ENCODE measurements at regions of chr2 and their contacts with region 1.

Region 1: GRCh38 chr2:54755641-54756326 is 32.3 kb downstream of the EML6 start:
- DNase-seq: peak; percentile 95
- H3K4me3 ChIP-seq: peak overlapping the region; percentile 62
- H3K27ac ChIP-seq: peak overlapping the region; percentile 92
- H3K4me1 ChIP-seq: peaks cover 83% of the 10 kb centered on the region
- CTCF ChIP-seq: peak; percentile 83

Region 2: DNA sequence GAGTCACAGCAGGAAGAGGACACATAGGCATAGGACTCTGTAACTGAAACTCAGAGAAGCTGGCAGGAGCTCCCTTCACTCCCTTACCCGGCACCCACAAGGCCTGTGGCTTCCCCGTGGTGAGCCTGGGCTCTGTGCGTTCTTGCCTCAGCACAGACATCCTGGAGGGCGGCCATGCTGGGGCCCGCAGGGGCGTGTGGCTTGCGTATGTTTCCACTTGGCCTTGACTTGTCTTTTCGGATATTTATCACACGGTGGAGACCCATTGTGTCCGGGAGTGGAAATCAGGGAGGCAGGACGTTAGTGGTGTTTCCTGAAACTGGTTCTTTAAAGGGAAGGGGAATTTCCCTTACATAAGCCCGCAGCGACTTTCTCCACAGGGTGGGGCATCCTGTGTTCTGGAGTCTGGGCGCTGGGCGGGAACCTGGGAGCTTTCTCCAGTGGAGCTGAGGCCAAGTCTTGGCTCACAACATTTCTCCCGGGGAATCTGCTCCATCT is 82.2 kb before region 1 on chr2:
- CTCF ChIA-PET with region 1: no interaction called
- POLR2A ChIA-PET with region 1: no interaction called
- intact Hi-C with region 1: no loop called
- DNase-seq: no peak
- H3K4me3 ChIP-seq: no peak overlapping the region
- H3K27ac ChIP-seq: no peak overlapping the region
- H3K4me1 ChIP-seq: peaks cover 30% of the 10 kb centered on the region
- CTCF ChIP-seq: no peak

Region 3: DNA sequence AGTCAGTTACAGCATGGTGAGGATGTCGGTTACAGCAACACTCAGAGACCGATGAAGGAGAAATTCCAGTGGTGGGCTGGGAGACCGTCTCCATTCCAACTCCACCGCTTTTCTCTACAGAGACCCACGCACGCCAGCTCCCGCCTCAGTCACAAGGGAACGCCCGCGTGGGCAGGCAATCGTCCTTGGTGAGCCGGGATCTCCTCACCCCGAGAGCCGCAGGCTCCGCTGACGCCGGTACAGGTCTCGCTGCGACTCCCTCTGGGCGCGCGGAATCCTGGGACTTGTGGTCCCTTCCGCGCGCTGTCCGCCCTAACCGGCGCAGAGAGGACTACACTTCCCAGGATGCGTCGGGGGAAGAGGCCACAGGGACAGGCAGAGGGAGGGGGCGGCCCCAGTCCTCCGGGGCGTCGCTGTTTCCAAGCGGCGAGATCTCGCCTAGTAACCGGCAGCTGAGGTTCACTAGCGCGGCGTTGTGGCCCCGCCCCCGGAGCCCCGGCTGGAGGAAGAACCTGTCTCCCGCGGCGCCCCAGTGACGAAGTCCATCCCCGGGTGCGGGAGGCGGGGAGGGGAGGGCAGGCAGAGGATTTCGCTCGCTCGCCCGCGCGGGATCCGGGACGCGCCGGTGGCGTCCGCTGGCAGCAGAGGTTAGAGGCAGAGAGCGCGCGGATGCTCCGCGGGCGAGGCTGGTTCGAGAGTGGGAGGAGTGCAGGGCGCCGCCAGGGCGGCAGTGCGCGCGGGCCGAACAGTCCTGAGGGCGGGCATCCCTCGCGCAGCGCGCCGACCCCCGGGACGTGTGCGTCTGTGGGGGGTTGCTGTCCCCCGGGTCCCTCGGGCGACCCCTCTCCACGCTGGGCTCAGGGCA is 32.4 kb before region 1 on chr2 and contains the start of gene EML6:
- CTCF ChIA-PET with region 1: no interaction called
- POLR2A ChIA-PET with region 1: interaction called, 15 read pairs
- intact Hi-C with region 1: loop called (anchors 1 kb)
- DNase-seq: peak; percentile 99
- H3K4me3 ChIP-seq: peak within 1 kb of the TSS; percentile 79
- H3K27ac ChIP-seq: peak within 1 kb of the TSS; percentile 69
- H3K4me1 ChIP-seq: peaks cover 42% of the 10 kb centered on the region
- CTCF ChIP-seq: peak; percentile 65
- total RNA-seq, gene EML6: 298 and 367 TPM in 2 replicates

Region 4: GRCh38 chr2:54773838-54774237 is 18.1 kb after region 1 on chr2:
- CTCF ChIA-PET with region 1: interaction called, 4 read pairs
- POLR2A ChIA-PET with region 1: interaction called, 15 read pairs
- intact Hi-C with region 1: no loop called
- DNase-seq: no peak
- H3K4me3 ChIP-seq: no peak overlapping the region
- H3K27ac ChIP-seq: no peak overlapping the region
- H3K4me1 ChIP-seq: peaks cover 7% of the 10 kb centered on the region
- CTCF ChIP-seq: 0 out of 2 replicates have a peak, but pooled peaks have one; percentile 24

Region 5: GRCh38 chr2:54824567-54824966 is 68.8 kb after region 1 on chr2:
- CTCF ChIA-PET with region 1: no interaction called
- POLR2A ChIA-PET with region 1: no interaction called
- intact Hi-C with region 1: no loop called
- DNase-seq: no peak
- H3K4me3 ChIP-seq: no peak overlapping the region
- H3K27ac ChIP-seq: no peak overlapping the region
- H3K4me1 ChIP-seq: no peaks in the 10 kb centered on the region
- CTCF ChIP-seq: no peak

Region 6: GRCh38 chr2:54838585-54839035 is 82.8 kb after region 1 on chr2:
- CTCF ChIA-PET with region 1: no interaction called
- POLR2A ChIA-PET with region 1: interaction called, 4 read pairs
- intact Hi-C with region 1: loop called (anchors 1 kb)
- DNase-seq: peak; percentile 82
- H3K4me3 ChIP-seq: no peak overlapping the region
- H3K27ac ChIP-seq: peak overlapping the region; percentile 35
- H3K4me1 ChIP-seq: peaks cover 24% of the 10 kb centered on the region
- CTCF ChIP-seq: peak; percentile 98

Region 7: GRCh38 chr2:55010149-55010591 is 254.4 kb after region 1 on chr2:
- CTCF ChIA-PET with region 1: no interaction called
- POLR2A ChIA-PET with region 1: no interaction called
- intact Hi-C with region 1: loop called (anchors 5 kb)
- DNase-seq: peak; percentile 73
- H3K4me3 ChIP-seq: peak overlapping the region; percentile 63
- H3K27ac ChIP-seq: peak overlapping the region; percentile 2
- H3K4me1 ChIP-seq: peaks cover 36% of the 10 kb centered on the region
- CTCF ChIP-seq: no peak

Region 8: DNA sequence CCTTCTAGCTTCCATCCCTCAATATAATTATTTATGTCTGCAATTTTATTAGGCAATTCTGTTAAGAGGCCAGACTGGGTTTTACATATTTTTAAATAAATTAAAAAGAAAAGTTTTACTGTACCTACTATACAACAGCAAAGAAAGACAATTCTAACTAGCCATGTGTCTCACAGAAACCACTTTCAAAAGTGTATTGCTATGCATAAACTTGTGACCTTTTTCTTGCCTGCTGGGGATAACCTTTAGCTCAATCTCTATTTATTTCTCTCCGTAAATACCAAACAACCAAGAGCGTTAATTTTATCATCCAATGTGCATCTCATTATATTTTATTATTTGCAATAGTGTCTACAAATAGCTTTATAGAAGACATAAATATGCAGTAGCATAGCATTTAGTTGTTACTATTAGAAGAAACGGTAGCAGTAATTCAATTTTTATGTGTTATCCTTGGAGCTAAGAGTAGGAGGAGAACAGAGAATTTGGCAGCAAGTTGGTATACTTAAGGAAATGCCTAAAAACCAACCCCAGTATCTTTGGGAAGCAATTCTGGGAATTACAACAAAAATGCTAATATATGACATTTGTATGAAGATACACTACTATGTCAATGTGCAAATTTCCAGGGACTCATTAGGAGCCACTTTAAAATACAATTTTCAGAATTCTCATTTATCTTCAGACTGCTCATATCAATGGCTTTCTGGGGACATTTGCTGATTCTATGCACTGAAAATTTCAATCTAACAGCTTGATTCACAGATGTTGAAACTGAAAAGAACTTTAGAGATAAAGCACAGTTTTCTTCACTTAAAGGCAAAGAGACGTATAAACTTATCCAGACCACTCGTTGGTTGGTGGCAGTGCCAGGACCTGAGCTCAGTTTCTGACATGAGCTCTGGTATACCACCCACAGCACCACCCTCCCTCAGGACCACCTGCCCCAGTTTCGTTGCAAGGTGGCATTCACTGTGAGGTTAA is 317.5 kb after region 1 on chr2:
- CTCF ChIA-PET with region 1: interaction called, 29 read pairs
- POLR2A ChIA-PET with region 1: no interaction called
- intact Hi-C with region 1: no loop called
- DNase-seq: no peak
- H3K4me3 ChIP-seq: no peak overlapping the region
- H3K27ac ChIP-seq: no peak overlapping the region
- H3K4me1 ChIP-seq: no peaks in the 10 kb centered on the region
- CTCF ChIP-seq: no peak

Measured in OCI-LY7 (cell line).